ENCODE measurements at regions of chr1 and their contacts with region 1.

Region 1: DNA sequence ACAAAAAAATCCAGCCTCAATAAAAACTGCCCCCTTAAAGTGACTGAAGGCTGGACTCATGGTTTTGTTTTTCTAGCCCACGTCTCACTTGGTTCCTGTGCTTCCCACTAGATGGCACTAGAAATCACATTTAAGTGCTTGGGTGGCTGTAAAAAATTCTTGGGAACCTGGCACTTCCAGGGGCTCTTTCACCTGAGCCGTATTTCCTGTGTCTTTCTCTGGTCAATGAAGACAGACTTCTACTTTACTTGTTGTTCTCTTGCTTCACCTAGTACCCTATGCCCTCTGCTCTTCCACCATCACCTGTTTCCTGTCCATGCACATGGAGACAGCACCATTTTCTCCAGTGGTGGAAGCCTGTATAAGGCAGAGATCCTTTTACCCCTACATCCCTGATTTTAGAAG is 20.0 kb downstream of the METTL13 start:
- DNase-seq: no peak
- H3K4me3 ChIP-seq: no peak overlapping the region
- H3K27ac ChIP-seq: no peak overlapping the region
- H3K4me1 ChIP-seq: no peaks in the 10 kb centered on the region
- H3K27me3 ChIP-seq: no peaks in the 10 kb centered on the region
- CTCF ChIP-seq: peak in 2 of 3 donors; percentile 58 to 67
- POLR2A ChIP-seq: no peak

Region 2: DNA sequence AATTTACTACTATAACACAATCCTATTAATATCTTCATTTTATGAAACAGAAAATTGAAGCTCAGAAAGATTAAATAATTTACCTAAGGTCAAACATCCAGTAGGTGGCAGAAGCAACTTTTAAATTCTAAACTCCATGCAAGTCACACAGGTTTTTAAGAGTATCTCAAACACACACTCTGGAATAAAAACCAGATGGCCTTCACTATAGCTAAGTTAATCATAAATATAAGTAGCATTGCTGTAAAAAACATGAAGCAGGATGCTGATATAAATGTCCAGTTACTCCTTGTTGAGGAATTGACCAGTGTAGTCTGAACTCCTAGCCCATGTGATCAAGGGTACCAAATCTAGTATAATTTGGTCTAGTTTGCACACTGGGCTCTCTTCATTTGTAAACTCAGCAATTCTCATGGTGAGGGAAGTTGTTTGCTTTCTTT is 720.2 kb before region 1 on chr1:
- intact Hi-C with region 1: no loop called
- DNase-seq: no peak
- H3K4me3 ChIP-seq: no peak overlapping the region
- H3K27ac ChIP-seq: peak overlapping the region; percentile 58 to 69
- H3K4me1 ChIP-seq: no peaks in the 10 kb centered on the region
- H3K27me3 ChIP-seq: no peaks in the 10 kb centered on the region
- CTCF ChIP-seq: peak; percentile 47 to 67 (median 52)
- POLR2A ChIP-seq: no peak

Region 3: DNA sequence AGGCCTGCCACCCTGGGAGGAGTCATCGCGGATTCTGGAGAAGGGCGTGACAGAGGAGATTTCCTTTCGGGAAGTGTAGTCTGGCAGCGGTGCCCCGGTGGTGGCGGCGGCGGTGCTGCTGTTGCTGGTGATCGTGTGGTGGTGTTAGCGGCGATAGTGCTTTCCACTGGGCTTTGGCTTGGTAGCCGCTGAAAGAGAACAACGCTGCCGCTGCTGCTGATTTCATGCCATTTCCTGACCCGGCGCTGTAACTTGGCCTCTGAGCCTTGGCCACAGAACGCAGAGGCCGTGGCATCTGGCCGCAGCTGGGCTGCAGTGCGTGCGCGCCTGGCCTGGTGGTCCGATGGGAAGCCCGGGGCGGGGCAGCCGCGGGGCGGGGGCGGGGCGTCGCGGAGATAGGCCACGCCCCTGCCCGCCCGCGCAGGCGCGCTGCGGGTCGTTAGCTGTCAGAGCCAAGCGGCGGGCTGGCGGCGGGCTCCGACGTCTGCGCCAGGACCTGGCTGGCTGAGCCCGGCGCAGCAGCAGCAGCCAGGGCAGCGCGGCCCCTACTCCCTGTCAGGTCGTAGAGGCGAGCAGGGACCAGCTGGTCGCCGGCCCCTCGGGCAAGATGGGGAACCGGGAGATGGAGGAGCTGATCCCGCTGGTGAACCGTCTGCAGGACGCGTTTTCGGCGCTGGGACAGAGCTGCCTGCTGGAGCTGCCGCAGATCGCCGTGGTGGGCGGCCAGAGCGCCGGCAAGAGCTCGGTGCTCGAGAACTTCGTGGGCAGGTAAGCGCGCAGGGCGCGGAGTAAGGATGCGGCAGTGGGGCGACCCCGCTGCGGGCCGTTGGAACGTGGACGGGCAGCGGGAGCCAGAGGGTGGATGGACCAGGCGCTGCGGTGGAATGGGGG is 39.8 kb after region 1 on chr1 and contains the start of gene DNM3:
- intact Hi-C with region 1: loop called (anchors 2 kb)
- DNase-seq: peak; percentile 39 to 56
- H3K4me3 ChIP-seq: peak within 1 kb of the TSS; percentile 71 to 85 (median 75)
- H3K27ac ChIP-seq: peak within 1 kb of the TSS; percentile 52 to 61
- H3K4me1 ChIP-seq: no peaks in the 10 kb centered on the region
- H3K27me3 ChIP-seq: no peaks in the 10 kb centered on the region
- CTCF ChIP-seq: no peak
- POLR2A ChIP-seq: no peak
- total RNA-seq, gene DNM3: 5.1 to 7.5 (median 6.6) TPM

Region 4: DNA sequence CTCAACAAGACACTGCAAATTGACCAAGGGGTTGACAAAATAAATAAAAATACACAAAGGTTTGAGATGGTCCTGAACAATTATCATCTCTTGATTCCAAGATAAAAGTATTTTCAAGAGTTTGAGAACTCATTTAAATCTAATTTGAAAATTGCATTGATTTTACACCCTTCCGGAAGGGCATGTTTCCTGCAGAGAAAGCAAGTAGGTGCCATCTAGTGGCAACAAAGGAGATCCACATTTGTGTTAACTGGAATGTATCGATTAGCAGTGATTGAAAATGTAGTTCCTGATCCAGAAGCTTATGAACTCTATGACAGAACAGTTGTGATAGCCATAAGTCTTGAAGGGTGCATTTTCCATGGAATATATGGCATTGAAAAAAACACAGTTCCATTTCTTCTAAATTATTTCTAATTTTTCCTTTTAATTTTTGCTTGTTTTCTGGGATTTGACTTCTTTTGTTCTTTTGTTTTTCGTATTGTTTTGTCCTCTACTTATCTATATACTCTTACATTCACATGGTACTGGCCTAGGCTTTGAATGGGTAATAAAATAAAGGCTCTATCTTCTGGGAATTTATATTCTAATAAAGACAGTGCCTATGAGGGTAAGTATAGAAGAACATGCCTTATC is 183.5 kb after region 1 on chr1:
- intact Hi-C with region 1: loop called (anchors 5 kb)
- DNase-seq: no peak
- H3K4me3 ChIP-seq: no peak overlapping the region
- H3K27ac ChIP-seq: no peak overlapping the region
- H3K4me1 ChIP-seq: no peaks in the 10 kb centered on the region
- H3K27me3 ChIP-seq: no peaks in the 10 kb centered on the region
- CTCF ChIP-seq: peak in 2 of 3 donors; percentile 65 to 73
- POLR2A ChIP-seq: no peak

Region 5: DNA sequence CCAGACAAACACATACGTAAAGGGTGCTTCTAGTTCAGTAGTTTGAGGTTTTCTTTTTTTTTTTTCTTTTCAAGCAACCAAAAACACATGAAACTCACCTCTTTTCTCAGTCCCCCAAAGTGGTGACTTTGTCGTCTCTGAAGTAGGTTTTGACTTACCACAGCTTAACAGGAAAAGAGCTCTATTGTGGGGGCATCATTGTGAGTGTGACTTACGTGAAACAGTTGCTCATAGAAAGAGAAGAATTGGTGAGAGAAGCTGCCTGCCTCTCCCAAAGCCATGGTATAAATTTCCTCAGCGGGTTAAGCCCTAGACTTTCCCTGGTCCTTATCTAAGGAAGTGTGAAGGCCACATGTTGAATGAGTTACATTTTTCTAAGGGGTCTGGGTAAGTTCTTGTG is 869.3 kb after region 1 on chr1:
- intact Hi-C with region 1: no loop called
- DNase-seq: no peak
- H3K4me3 ChIP-seq: no peak overlapping the region
- H3K27ac ChIP-seq: no peak overlapping the region
- H3K4me1 ChIP-seq: no peaks in the 10 kb centered on the region
- H3K27me3 ChIP-seq: no peaks in the 10 kb centered on the region
- CTCF ChIP-seq: no peak
- POLR2A ChIP-seq: no peak

Measured in breast epithelium (tissue), 4 donors.